Activated CD4-positive, alpha-beta memory T cell treated with anti-CD3 and anti-CD28 coated beads for 36 hours (primary cell): ENCODE measurements at regions of chr6 and their contacts with region 1.

Region 1: GRCh38 chr6:149357726-149358538 is 40.4 kb downstream of the TAB2 start:
- DNase-seq: no peak
- H3K4me3 Mint-ChIP-seq: no peak overlapping the region
- H3K27ac Mint-ChIP-seq: peak overlapping the region; percentile 75
- H3K4me1 Mint-ChIP-seq: peaks cover 88% of the 10 kb centered on the region
- H3K27me3 Mint-ChIP-seq: no peaks in the 10 kb centered on the region

Region 2: GRCh38 chr6:149259753-149260152 is 98.2 kb before region 1 on chr6:
- CTCF ChIA-PET with region 1: no interaction called
- POLR2A ChIA-PET with region 1: no interaction called
- intact Hi-C with region 1: no loop called
- DNase-seq: no peak
- H3K4me3 Mint-ChIP-seq: no peak overlapping the region
- H3K27ac Mint-ChIP-seq: no peak overlapping the region
- H3K4me1 Mint-ChIP-seq: peaks cover 24% of the 10 kb centered on the region
- H3K27me3 Mint-ChIP-seq: no peaks in the 10 kb centered on the region

Region 3: DNA sequence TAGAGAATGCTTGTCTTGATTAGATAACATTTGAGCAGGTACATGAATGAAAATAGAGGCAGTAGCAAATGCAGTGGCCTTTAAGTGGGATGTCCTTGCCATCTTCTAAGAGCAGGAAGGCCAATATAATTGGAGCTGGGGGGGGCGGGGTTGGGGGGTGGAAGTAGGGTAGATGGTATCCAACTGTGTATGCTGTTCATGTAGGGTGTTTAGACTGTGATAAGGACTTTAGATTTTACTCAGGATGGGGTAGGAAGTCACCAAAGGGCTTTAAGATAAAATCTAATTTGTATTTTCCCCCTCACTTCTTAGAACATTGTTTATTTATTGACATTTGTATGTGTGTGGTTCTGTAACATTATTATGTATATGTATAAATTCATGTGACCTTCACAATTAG is 28.4 kb before region 1 on chr6:
- CTCF ChIA-PET with region 1: no interaction called
- POLR2A ChIA-PET with region 1: no interaction called
- intact Hi-C with region 1: no loop called
- DNase-seq: no peak
- H3K4me3 Mint-ChIP-seq: peak overlapping the region; percentile 15
- H3K27ac Mint-ChIP-seq: peak overlapping the region; percentile 75
- H3K4me1 Mint-ChIP-seq: peaks cover 93% of the 10 kb centered on the region
- H3K27me3 Mint-ChIP-seq: no peaks in the 10 kb centered on the region

Region 4: GRCh38 chr6:149342525-149342924 is 15.4 kb before region 1 on chr6:
- CTCF ChIA-PET with region 1: no interaction called
- POLR2A ChIA-PET with region 1: no interaction called
- intact Hi-C with region 1: loop called (anchors 2 kb)
- DNase-seq: no peak
- H3K4me3 Mint-ChIP-seq: no peak overlapping the region
- H3K27ac Mint-ChIP-seq: peak overlapping the region; percentile 83
- H3K4me1 Mint-ChIP-seq: peaks cover 78% of the 10 kb centered on the region
- H3K27me3 Mint-ChIP-seq: no peaks in the 10 kb centered on the region

Region 5: GRCh38 chr6:149389509-149390297 is 31.8 kb after region 1 on chr6:
- CTCF ChIA-PET with region 1: no interaction called
- POLR2A ChIA-PET with region 1: no interaction called
- intact Hi-C with region 1: loop called (anchors 2 kb)
- DNase-seq: no peak
- H3K4me3 Mint-ChIP-seq: no peak overlapping the region
- H3K27ac Mint-ChIP-seq: peak overlapping the region; percentile 13
- H3K4me1 Mint-ChIP-seq: peaks cover 69% of the 10 kb centered on the region
- H3K27me3 Mint-ChIP-seq: no peaks in the 10 kb centered on the region